ENCODE measurements at regions of chr17 and their contacts with region 1.

Region 1: DNA sequence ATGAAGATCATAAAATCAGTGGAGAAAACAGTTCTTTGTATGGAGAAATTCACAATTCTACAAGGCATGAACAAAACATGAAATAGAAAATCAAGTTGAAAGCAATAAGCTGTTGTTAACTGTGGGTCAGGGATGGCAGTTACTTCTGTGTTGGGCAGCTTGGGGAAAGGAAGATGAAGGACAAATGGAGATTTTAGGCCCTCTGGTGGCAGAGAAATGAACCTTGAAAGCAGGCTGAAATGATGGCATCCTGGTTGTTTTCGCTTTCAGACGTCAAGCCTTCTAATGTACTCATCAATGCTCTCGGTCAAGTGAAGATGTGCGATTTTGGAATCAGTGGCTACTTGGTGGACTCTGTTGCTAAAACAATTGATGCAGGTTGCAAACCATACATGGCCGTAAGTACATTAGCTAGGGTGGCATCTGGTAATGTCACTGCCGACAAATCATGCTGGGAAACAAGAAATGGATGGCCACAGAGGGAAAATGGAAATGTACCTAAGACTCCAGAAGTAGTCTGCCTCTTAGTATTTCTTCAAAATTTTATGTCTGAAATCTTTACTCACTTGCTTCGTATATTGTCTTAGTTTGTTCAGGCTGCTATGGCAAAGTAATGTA is 108.9 kb downstream of the MAP2K6 start:
- DNase-seq: no peak
- H3K4me3 ChIP-seq: no peak overlapping the region
- H3K27ac ChIP-seq: no peak overlapping the region
- H3K4me1 ChIP-seq: peaks cover 0 to 18% (median 13%) of the 10 kb centered on the region in 4 donors
- H3K27me3 ChIP-seq: no peaks in the 10 kb centered on the region
- CTCF ChIP-seq: peak; percentile 57 to 71 (median 62)
- EP300 ChIP-seq: no peak
- POLR2A ChIP-seq: no peak

Region 2: DNA sequence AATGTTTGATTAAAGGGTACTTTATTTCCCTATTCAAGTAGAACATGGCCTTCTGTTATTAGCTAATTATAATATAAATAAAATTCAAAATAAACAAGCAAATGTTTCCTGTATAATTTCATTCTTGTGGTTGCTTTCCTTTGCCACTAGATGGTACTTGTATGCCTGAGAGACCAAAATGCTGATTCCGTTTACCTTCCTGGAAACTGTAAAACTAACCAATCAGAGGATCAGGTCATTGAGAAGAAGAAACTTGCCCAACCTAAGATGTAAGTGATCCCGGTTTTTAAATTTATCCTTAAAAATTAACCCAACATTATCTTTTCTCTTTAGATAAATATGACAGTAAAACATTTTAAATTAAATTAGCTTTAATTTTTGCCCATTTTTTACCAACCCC is 188.3 kb before region 1 on chr17:
- intact Hi-C with region 1: loop called (anchors 5 kb)
- DNase-seq: no peak
- H3K4me3 ChIP-seq: no peak overlapping the region
- H3K27ac ChIP-seq: no peak overlapping the region
- H3K4me1 ChIP-seq: no peaks in the 10 kb centered on the region
- H3K27me3 ChIP-seq: no peaks in the 10 kb centered on the region
- CTCF ChIP-seq: peak; percentile 26 to 42 (median 27)
- EP300 ChIP-seq: no peak
- POLR2A ChIP-seq: no peak

Region 3: GRCh38 chr17:69414408-69415274 is 108.7 kb before region 1 on chr17 and contains the start of gene MAP2K6:
- intact Hi-C with region 1: loop called (anchors 10 kb)
- DNase-seq: peak; percentile 95
- H3K4me3 ChIP-seq: peak within 1 kb of the TSS; percentile 49 to 66 (median 59)
- H3K27ac ChIP-seq: peak within 1 kb of the TSS; percentile 29 to 69 (median 50)
- H3K4me1 ChIP-seq: peaks cover 19 to 48% (median 39%) of the 10 kb centered on the region in 4 donors
- H3K27me3 ChIP-seq: no peaks in the 10 kb centered on the region
- CTCF ChIP-seq: no peak
- EP300 ChIP-seq: no peak
- POLR2A ChIP-seq: no peak
- total RNA-seq, gene MAP2K6: 0.83 to 3.1 (median 1.5) TPM

Region 4: DNA sequence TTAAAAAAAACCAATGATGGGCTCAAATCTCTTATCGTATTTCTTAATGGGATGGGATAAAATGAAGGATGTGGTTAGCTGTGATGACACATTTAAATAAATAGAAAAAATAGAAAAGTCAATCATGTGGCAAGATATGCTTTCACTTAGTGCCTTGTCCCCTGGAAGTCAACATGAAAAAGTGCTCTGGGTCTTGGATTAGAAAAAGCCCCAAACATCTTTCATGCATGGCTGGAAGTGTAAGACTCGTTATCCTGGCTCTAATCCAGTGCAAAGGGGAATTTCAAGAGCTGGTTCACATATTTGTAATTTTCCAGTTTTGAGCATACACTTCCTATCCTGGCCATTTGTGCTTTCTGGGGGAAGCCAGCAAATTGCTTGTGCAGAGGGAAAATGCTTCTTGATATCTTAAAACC is 52.0 kb after region 1 on chr17:
- intact Hi-C with region 1: no loop called
- DNase-seq: no peak
- H3K4me3 ChIP-seq: no peak overlapping the region
- H3K27ac ChIP-seq: peak overlapping the region; percentile 46 to 69 (median 65)
- H3K4me1 ChIP-seq: peaks cover 19 to 38% (median 30%) of the 10 kb centered on the region in 4 donors
- H3K27me3 ChIP-seq: no peaks in the 10 kb centered on the region
- CTCF ChIP-seq: no peak
- EP300 ChIP-seq: no peak
- POLR2A ChIP-seq: no peak

Region 5: DNA sequence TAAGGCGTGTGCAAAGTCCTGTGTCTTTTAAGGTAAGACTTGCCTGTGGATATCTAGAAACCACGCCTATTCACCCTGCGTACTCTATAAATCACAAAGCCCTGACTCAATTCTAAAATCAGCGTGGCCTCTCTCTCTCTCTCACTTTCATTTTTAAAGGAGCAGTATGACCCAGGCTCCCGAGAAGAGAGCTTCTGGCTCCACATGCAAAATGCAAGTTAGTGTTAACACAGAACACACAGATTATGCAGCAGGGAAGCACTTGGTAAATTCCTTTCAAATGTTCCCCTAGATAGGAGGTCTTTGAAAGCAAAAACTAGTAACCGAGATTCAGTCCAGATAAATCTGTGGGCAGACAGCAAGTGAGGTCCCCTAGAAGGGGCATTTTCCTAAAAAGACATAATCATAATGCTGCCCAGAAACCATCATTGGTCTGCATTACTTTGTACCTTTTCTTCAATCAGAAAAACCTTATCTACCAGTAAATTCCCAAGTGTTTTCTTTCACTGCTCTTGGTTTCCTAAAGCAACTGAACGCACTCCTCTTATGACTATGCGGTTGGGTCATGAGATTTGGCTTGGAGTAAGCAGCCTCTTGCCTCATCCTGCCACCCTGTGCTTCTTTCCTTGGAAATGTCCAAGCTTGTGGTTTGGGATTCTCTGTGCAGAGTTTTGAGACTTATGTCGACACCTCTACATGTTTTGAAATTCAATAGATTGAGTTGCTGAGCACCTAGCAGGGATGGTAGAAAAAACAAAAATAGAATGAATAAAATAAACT is 614.3 kb after region 1 on chr17:
- intact Hi-C with region 1: loop called (anchors 5 kb)
- DNase-seq: no peak
- H3K4me3 ChIP-seq: peak overlapping the region; percentile 40 to 48 (median 46)
- H3K27ac ChIP-seq: peak overlapping the region; percentile 73 to 89 (median 84)
- H3K4me1 ChIP-seq: peaks cover 18 to 33% (median 30%) of the 10 kb centered on the region in 4 donors
- H3K27me3 ChIP-seq: no peaks in the 10 kb centered on the region
- CTCF ChIP-seq: peak in 1 of 3 experiments; percentile 14
- EP300 ChIP-seq: no peak
- POLR2A ChIP-seq: no peak

Region 6: DNA sequence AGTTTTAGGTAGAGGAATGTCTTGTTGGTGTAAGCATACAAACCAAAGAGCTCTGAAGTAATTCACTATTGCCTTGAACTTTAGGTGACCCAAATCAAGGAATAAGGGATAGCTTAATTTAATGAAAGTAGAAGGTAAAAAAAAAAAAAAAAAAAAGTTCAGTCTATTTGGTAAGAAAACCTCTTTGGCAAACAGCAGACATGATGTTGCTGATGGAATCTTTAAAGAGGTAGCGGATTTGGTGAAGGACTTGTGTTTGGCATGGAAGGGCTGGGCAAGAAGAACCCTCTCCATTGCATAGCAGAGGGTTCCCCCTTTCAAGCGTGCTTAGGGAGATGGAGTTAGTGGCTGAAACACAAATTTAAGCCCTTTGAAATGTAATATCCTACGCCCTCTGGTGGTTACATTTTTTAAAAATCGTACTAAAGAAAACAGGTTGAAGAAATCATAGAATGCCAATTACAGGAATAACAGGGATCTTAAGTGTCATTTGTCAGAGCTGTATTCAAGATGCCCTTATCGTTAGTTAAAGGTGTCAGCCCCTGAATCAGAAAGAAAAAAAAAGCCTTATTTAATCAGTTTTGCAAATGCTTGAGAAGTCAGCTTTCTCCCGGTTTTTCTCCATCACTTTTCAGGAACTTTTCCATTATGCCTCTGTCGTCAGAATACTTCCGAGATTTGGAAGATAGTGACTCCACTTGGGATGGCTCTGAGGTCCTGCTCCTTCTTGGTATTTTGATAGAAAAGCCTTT is 1029.1 kb after region 1 on chr17:
- intact Hi-C with region 1: loop called (anchors 5 kb)
- DNase-seq: no peak
- H3K4me3 ChIP-seq: no peak overlapping the region
- H3K27ac ChIP-seq: no peak overlapping the region
- H3K4me1 ChIP-seq: no peaks in the 10 kb centered on the region
- H3K27me3 ChIP-seq: no peaks in the 10 kb centered on the region
- CTCF ChIP-seq: peak; percentile 48 to 54 (median 50)
- EP300 ChIP-seq: no peak
- POLR2A ChIP-seq: no peak

Region 7: GRCh38 chr17:70622368-70623260 is 1099.3 kb after region 1 on chr17:
- intact Hi-C with region 1: loop called (anchors 10 kb)
- DNase-seq: no peak
- H3K4me3 ChIP-seq: no peak overlapping the region
- H3K27ac ChIP-seq: no peak overlapping the region
- H3K4me1 ChIP-seq: peaks cover 0 to 6% (median 4%) of the 10 kb centered on the region in 4 donors
- H3K27me3 ChIP-seq: peaks cover 0 to 5% (median 0%) of the 10 kb centered on the region in 4 donors
- CTCF ChIP-seq: peak; percentile 18 to 40 (median 22)
- EP300 ChIP-seq: no peak
- POLR2A ChIP-seq: no peak